CD8-positive, alpha-beta memory T cell (primary cell): ENCODE measurements at regions of chr9 and their contacts with region 1.

Region 1: GRCh38 chr9:92669890-92670708 is at the start of gene IPPK:
- DNase-seq: peak; percentile 97 to 98 (median 98)
- H3K4me3 ChIP-seq: peak within 1 kb of the TSS; percentile 99
- H3K4me3 Mint-ChIP-seq: peak within 1 kb of the TSS; percentile 94 to 100 (median 96)
- H3K27ac ChIP-seq: peak within 1 kb of the TSS; percentile 96
- H3K27ac Mint-ChIP-seq: peak within 1 kb of the TSS; percentile 97 to 100 (median 98)
- H3K4me1 ChIP-seq: peaks cover 25% of the 10 kb centered on the region
- H3K4me1 Mint-ChIP-seq: peaks cover 29 to 52% (median 43%) of the 10 kb centered on the region in 3 donors
- H3K27me3 ChIP-seq: no peaks in the 10 kb centered on the region
- H3K27me3 Mint-ChIP-seq: no peaks in the 10 kb centered on the region
- total RNA-seq, gene IPPK: 13.5 to 13.7 TPM

Region 2: GRCh38 chr9:92291577-92291976 is 378.5 kb before region 1 on chr9:
- CTCF ChIA-PET with region 1: no interaction called
- POLR2A ChIA-PET with region 1: interaction called, 10 read pairs
- DNase-seq: no peak
- H3K4me3 ChIP-seq: no peak overlapping the region
- H3K4me3 Mint-ChIP-seq: peak overlapping the region in 3 of 7 donors; percentile 3 to 27 (median 16)
- H3K27ac ChIP-seq: no peak overlapping the region
- H3K27ac Mint-ChIP-seq: peak overlapping the region in 5 of 8 donors; percentile 1 to 95 (median 48)
- H3K4me1 ChIP-seq: peaks cover 34% of the 10 kb centered on the region
- H3K4me1 Mint-ChIP-seq: peaks cover 37 to 76% (median 58%) of the 10 kb centered on the region in 3 donors
- H3K27me3 ChIP-seq: no peaks in the 10 kb centered on the region
- H3K27me3 Mint-ChIP-seq: no peaks in the 10 kb centered on the region

Region 3: DNA sequence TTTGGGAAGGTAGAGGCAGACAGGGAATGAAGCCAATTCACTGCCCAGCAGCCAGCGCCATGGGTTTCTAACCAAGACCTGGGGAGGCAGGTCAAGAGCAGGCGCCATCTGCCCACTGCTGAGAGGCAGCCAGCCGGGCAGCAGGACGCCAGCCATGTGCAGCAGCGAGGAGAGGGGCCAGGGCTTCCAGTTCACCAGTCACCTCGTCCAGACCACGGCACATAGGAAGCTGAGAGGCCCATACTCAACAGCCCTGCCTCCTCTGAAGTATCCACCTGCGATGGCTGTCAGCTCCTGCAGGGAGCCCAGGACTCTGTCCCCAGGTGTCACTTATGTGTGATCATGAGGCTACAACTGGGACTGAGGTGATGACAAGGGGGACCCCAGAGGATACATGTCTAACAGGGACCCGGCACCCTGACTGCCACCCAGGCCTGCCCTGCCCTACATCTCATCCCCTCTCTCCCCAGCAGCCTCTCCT is 30.3 kb before region 1 on chr9:
- CTCF ChIA-PET with region 1: no interaction called
- POLR2A ChIA-PET with region 1: no interaction called
- DNase-seq: no peak
- H3K4me3 ChIP-seq: no peak overlapping the region
- H3K4me3 Mint-ChIP-seq: no peak overlapping the region
- H3K27ac ChIP-seq: no peak overlapping the region
- H3K27ac Mint-ChIP-seq: no peak overlapping the region
- H3K4me1 ChIP-seq: no peaks in the 10 kb centered on the region
- H3K4me1 Mint-ChIP-seq: no peaks in the 10 kb centered on the region
- H3K27me3 ChIP-seq: no peaks in the 10 kb centered on the region
- H3K27me3 Mint-ChIP-seq: peaks cover 0 to 2% of the 10 kb centered on the region in 2 donors

Region 4: GRCh38 chr9:92764988-92765936 is 95.2 kb after region 1 on chr9:
- CTCF ChIA-PET with region 1: interaction called, 7 read pairs
- POLR2A ChIA-PET with region 1: interaction called, 15 read pairs
- DNase-seq: peak; percentile 95 to 99 (median 98)
- H3K4me3 ChIP-seq: peak overlapping the region; percentile 81
- H3K4me3 Mint-ChIP-seq: peak overlapping the region; percentile 83 to 95 (median 91)
- H3K27ac ChIP-seq: peak overlapping the region; percentile 99
- H3K27ac Mint-ChIP-seq: peak overlapping the region; percentile 92 to 99 (median 98)
- H3K4me1 ChIP-seq: peaks cover 37% of the 10 kb centered on the region
- H3K4me1 Mint-ChIP-seq: peaks cover 43 to 59% (median 46%) of the 10 kb centered on the region in 3 donors
- H3K27me3 ChIP-seq: no peaks in the 10 kb centered on the region
- H3K27me3 Mint-ChIP-seq: no peaks in the 10 kb centered on the region